OCI-LY7 (cell line): ENCODE measurements at regions of chr18 and their contacts with region 1.

Region 1: DNA sequence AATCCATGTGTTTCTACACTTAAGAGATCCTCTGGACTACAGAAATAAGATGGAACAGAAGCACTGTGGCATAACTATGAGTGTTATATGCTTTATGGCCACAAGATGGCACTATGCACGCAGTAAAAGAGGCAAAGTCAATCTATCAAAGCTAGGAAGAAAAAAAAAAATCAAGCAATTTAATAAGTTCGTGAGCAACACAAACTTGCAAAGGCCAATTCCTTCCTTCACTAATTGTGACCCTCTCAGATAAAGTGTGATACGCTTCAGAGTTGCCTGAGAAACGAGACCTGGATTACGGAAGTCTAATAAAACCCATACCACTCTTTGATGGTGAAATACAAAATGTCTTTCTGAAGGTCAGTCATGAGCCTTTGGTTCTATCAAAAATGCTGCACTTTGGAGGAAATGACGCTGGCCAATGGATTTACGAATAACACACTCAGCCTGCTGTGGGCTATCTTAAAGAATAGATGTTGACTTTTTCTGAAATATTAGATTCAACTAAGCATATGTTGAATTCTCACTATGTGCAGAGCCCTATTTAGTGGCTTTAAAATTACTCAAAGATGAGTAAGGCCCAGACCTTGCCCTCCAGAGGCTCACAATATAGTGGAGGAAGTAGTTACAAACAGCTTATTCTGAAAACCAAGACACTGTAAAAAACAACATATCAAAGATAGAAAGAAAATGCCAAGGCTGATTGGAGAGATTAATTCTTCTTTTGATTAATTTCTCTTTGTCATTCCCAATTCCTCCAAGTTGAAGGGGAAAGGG is 35.5 kb upstream of the TTR start:
- DNase-seq: peak; percentile 69
- H3K4me3 ChIP-seq: peak overlapping the region; percentile 12
- H3K27ac ChIP-seq: peak overlapping the region; percentile 11
- H3K4me1 ChIP-seq: peaks cover 8% of the 10 kb centered on the region
- CTCF ChIP-seq: peak; percentile 86

Region 2: GRCh38 chr18:31624892-31625640 is 68.9 kb after region 1 on chr18:
- CTCF ChIA-PET with region 1: no interaction called
- POLR2A ChIA-PET with region 1: no interaction called
- intact Hi-C with region 1: loop called (anchors 5 kb)
- DNase-seq: no peak
- H3K4me3 ChIP-seq: no peak overlapping the region
- H3K27ac ChIP-seq: no peak overlapping the region
- H3K4me1 ChIP-seq: no peaks in the 10 kb centered on the region
- CTCF ChIP-seq: no peak

Region 3: GRCh38 chr18:31685097-31686082 is 129.2 kb after region 1 on chr18:
- CTCF ChIA-PET with region 1: no interaction called
- POLR2A ChIA-PET with region 1: no interaction called
- intact Hi-C with region 1: loop called (anchors 1 kb)
- DNase-seq: peak; percentile 82
- H3K4me3 ChIP-seq: peak overlapping the region; percentile 75
- H3K27ac ChIP-seq: peak overlapping the region; percentile 86
- H3K4me1 ChIP-seq: peaks cover 37% of the 10 kb centered on the region
- CTCF ChIP-seq: 0 out of 2 replicates have a peak, but pooled peaks have one; percentile 34

Region 4: DNA sequence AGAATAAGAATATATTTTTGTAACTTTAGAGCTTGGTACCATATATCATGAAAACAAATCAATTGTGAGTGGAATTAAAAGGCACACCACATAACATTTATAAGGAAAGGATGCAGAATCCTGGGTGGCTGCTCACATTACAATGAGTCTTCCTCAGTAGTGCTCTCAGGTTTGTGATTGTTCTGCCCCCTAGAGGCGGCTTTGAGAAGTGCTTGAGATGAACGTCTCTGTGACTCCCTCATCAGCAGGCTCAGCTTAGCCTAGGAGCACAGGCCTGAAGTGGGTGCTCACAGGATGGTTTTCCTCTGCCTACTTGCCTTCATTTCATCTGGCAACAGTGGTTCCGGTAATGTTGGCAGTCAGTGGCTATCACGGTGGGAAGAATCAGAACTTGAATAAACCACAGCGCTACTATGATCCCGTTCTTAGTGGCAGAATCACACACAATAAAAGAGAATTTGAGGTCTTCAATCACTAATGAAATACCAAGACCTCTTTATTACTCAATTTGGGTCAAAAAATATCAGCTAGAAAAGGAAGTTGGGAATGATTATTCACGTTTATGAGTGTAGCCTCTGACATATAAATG is 166.3 kb after region 1 on chr18:
- CTCF ChIA-PET with region 1: no interaction called
- POLR2A ChIA-PET with region 1: interaction called, 3 read pairs
- intact Hi-C with region 1: loop called (anchors 2 kb)
- DNase-seq: peak; percentile 69
- H3K4me3 ChIP-seq: no peak overlapping the region
- H3K27ac ChIP-seq: no peak overlapping the region
- H3K4me1 ChIP-seq: no peaks in the 10 kb centered on the region
- CTCF ChIP-seq: peak; percentile 80

Region 5: DNA sequence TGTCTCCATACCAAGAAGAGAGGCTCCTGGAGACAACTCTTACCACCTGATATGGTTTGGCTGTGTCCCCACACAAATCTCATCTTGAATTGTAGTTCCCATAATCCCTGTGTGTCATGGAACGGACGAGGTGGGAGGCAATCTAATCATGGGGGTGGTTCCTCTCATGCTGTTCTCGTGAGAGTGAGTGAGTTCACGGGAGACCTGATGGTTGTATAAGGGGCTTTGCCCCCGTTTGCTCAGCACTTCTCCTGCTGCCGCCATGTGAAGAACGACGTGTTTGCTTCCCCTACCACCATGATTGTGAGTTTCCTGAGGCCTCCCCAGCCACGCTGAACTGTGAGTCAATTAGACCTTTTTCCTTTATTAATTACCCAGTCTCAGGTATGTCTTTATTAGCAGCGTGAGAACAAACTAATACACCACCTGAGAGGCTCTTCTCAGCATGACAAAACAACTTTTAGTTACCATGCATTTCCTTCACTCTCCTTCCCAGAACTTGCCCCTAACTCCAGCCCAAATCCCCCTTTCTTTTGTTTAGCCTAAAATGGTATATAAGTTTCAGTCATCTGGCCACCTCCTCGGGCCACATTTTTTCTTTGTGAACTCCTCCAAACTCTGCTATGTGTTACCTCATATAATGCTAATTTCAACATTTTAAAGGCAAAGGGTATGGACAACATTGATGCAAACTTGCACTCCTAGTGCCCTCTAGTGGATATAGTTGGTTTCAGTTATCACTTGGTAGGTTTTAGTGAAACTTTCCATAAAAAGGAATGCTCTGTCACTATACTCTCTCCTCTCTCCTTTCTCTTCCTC is 263.2 kb after region 1 on chr18:
- CTCF ChIA-PET with region 1: no interaction called
- POLR2A ChIA-PET with region 1: no interaction called
- intact Hi-C with region 1: loop called (anchors 2 kb)
- DNase-seq: peak; percentile 50
- H3K4me3 ChIP-seq: no peak overlapping the region
- H3K27ac ChIP-seq: no peak overlapping the region
- H3K4me1 ChIP-seq: no peaks in the 10 kb centered on the region
- CTCF ChIP-seq: peak; percentile 81

Region 6: GRCh38 chr18:31977270-31977872 is 421.2 kb after region 1 on chr18:
- CTCF ChIA-PET with region 1: no interaction called
- POLR2A ChIA-PET with region 1: no interaction called
- intact Hi-C with region 1: loop called (anchors 10 kb)
- DNase-seq: peak; percentile 48
- H3K4me3 ChIP-seq: no peak overlapping the region
- H3K27ac ChIP-seq: no peak overlapping the region
- H3K4me1 ChIP-seq: no peaks in the 10 kb centered on the region
- CTCF ChIP-seq: peak; percentile 72